ENCODE measurements at regions of chr1 and their contacts with region 1.

Region 1: DNA sequence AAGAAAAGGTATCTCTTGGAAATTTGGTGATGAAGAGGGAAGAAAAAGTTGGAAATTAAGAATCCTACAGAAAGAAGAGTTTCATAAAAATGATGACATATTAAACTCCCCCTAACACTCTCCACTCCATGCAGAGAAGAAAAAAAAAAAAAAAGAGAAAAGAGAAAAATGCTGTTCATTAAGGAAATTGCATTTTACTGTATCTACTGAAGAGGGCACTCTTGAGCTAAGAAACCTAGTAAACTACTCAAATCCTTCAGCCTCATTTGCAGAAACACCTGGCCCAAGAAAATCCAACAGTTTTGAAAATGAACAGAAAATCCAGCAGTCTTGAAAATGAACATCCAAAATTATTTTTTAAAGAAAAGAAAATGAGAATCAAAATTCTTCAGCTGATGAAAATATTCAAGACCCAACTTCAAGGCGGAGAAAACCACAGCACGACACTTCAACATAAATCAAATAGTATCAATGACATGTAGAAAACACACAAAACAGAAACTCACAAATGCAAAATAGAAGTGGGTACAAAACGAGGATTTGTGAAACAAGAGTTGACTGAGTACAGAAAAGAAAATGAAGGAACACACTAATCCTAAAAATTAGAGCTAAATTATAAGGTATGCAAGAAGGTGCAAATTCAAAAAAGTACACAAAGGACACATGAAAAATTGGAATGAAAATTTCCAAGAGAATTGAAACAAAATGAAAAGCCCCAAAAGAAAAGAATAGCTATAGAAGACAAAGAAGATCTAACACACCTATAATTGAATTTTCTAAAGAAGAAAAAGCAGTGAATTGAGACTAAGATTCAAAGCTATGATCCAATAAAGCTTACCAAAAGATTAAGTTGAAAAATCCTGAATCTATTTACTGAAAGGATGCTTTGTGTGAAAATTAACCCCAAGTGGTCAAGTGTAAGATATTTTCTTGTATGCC is 73.2 kb upstream of the DNAJC6 start:
- DNase-seq: no peak
- ATAC-seq: no peak
- H3K4me3 ChIP-seq: no peak overlapping the region
- H3K27ac ChIP-seq: no peak overlapping the region
- H3K4me1 ChIP-seq: peaks cover 0 to 14% (median 0%) of the 10 kb centered on the region in 9 donors
- H3K27me3 ChIP-seq: no peaks in the 10 kb centered on the region
- CTCF ChIP-seq: peak; percentile 37 to 70 (median 60)

Region 2: GRCh38 chr1:65165269-65165993 is 70.7 kb before region 1 on chr1:
- intact Hi-C with region 1: no loop called
- DNase-seq: peak in 1 of 2 donors; percentile 21
- ATAC-seq: peak in 5 of 8 donors; percentile 11 to 48 (median 15)
- H3K4me3 ChIP-seq: no peak overlapping the region
- H3K27ac ChIP-seq: peak overlapping the region in 2 of 10 donors; percentile 10 to 32
- H3K4me1 ChIP-seq: peaks cover 0 to 85% (median 33%) of the 10 kb centered on the region in 9 donors
- H3K27me3 ChIP-seq: no peaks in the 10 kb centered on the region
- CTCF ChIP-seq: no peak

Region 3: DNA sequence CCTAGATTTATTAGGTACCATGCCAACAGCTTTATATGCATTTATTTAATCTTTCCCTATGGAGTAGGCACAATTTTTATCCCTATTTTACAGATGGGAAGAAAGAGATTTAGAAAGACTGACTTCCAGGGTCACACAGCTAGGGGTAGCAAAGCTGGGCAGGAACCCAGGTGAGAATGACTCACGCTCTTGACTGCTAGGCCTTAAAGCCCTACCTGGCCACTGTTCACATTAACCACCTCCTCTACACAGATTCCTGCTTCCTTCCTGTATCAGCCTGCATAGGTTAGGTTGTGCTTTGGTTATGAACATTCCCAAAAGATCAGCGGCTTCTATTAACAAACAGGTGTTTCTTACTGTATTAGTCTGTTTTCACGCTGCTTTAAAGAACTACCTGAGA is 126.4 kb after region 1 on chr1:
- intact Hi-C with region 1: no loop called
- DNase-seq: no peak
- ATAC-seq: no peak
- H3K4me3 ChIP-seq: no peak overlapping the region
- H3K27ac ChIP-seq: no peak overlapping the region
- H3K4me1 ChIP-seq: no peaks in the 10 kb centered on the region
- H3K27me3 ChIP-seq: no peaks in the 10 kb centered on the region
- CTCF ChIP-seq: no peak

Region 4: DNA sequence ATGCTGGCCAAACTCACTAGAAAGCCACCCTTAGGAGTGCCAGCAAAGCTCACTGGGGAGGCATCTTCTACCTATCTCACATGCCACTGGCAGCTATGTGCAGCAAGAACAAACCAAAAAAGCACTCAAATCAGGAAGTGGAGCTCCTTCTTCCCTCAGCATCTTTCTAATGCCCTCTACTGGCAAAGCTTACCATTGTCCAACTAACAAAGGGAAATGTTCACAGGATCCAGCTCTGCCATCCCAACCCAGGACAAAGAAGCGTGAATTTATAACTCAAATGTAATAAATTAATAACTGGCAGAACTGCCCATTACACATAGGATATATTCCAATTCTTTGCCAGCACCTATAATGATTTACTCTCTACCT is 223.2 kb after region 1 on chr1:
- intact Hi-C with region 1: loop called in 1 of 10 experiments (anchors 10 kb)
- DNase-seq: no peak
- ATAC-seq: peak in 1 of 8 donors; percentile 8
- H3K4me3 ChIP-seq: no peak overlapping the region
- H3K27ac ChIP-seq: no peak overlapping the region
- H3K4me1 ChIP-seq: no peaks in the 10 kb centered on the region
- H3K27me3 ChIP-seq: no peaks in the 10 kb centered on the region
- CTCF ChIP-seq: peak in 8 of 9 donors; percentile 13 to 58 (median 46)